CD4-positive, alpha-beta T cell (primary cell): ENCODE measurements at regions of chr2 and their contacts with region 1.

Region 1: GRCh38 chr2:136423516-136423996 is 305.6 kb upstream of the CXCR4 start:
- DNase-seq: peak; percentile 63 to 88 (median 72)
- ATAC-seq: peak; percentile 96
- H3K4me3 ChIP-seq: peak overlapping the region; percentile 56
- H3K4me3 Mint-ChIP-seq: peak overlapping the region; percentile 85
- H3K27ac ChIP-seq: no peak overlapping the region
- H3K27ac Mint-ChIP-seq: no peak overlapping the region
- H3K4me1 ChIP-seq: peaks cover 18% of the 10 kb centered on the region
- H3K4me1 Mint-ChIP-seq: peaks cover 15% of the 10 kb centered on the region
- H3K27me3 ChIP-seq: peaks cover 0 to 12% of the 10 kb centered on the region in 2 experiments
- H3K27me3 Mint-ChIP-seq: peaks cover 68% of the 10 kb centered on the region
- CTCF ChIP-seq: peak; percentile 93

Region 2: GRCh38 chr2:136407952-136408318 is 15.6 kb before region 1 on chr2:
- CTCF ChIA-PET with region 1: no interaction called
- POLR2A ChIA-PET with region 1: no interaction called
- intact Hi-C with region 1: no loop called
- DNase-seq: no peak
- ATAC-seq: no peak
- H3K4me3 ChIP-seq: no peak overlapping the region
- H3K4me3 Mint-ChIP-seq: no peak overlapping the region
- H3K27ac ChIP-seq: no peak overlapping the region
- H3K27ac Mint-ChIP-seq: no peak overlapping the region
- H3K4me1 ChIP-seq: no peaks in the 10 kb centered on the region
- H3K4me1 Mint-ChIP-seq: no peaks in the 10 kb centered on the region
- H3K27me3 ChIP-seq: peaks cover 13 to 22% of the 10 kb centered on the region in 2 experiments
- H3K27me3 Mint-ChIP-seq: peaks cover 48% of the 10 kb centered on the region
- CTCF ChIP-seq: no peak

Region 3: GRCh38 chr2:136653861-136654260 is 230.3 kb after region 1 on chr2:
- CTCF ChIA-PET with region 1: no interaction called
- POLR2A ChIA-PET with region 1: no interaction called
- intact Hi-C with region 1: loop called in 1 of 2 experiments (anchors 10 kb)
- DNase-seq: no peak
- ATAC-seq: no peak
- H3K4me3 ChIP-seq: no peak overlapping the region
- H3K4me3 Mint-ChIP-seq: no peak overlapping the region
- H3K27ac ChIP-seq: no peak overlapping the region
- H3K27ac Mint-ChIP-seq: no peak overlapping the region
- H3K4me1 ChIP-seq: no peaks in the 10 kb centered on the region
- H3K4me1 Mint-ChIP-seq: no peaks in the 10 kb centered on the region
- H3K27me3 ChIP-seq: peaks cover 0 to 3% of the 10 kb centered on the region in 2 experiments
- H3K27me3 Mint-ChIP-seq: peaks cover 13% of the 10 kb centered on the region
- CTCF ChIP-seq: no peak

Region 4: DNA sequence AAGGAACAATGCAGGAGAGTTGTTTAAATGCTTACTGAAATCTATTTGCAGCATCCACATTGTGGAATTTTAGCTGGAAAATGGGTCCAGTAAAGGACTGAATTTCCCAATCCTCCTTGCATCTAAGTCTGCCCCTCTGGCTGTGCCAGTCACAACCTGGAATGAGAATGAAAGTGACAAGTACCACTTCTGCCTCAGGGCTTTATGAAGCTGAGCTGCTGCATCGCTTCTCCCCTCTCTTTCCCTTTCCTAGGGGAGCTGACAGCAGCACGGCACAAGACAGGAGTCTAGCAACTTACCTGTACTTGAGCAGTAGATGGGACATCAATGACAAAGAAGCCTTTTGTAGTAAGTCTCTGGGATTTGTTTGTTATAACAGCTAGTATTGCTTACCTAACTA is 314.5 kb after region 1 on chr2:
- CTCF ChIA-PET with region 1: no interaction called
- POLR2A ChIA-PET with region 1: no interaction called
- intact Hi-C with region 1: loop called in 1 of 2 experiments (anchors 10 kb)
- DNase-seq: no peak
- ATAC-seq: no peak
- H3K4me3 ChIP-seq: no peak overlapping the region
- H3K4me3 Mint-ChIP-seq: no peak overlapping the region
- H3K27ac ChIP-seq: no peak overlapping the region
- H3K27ac Mint-ChIP-seq: no peak overlapping the region
- H3K4me1 ChIP-seq: no peaks in the 10 kb centered on the region
- H3K4me1 Mint-ChIP-seq: no peaks in the 10 kb centered on the region
- H3K27me3 ChIP-seq: peaks cover 0 to 3% of the 10 kb centered on the region in 2 experiments
- H3K27me3 Mint-ChIP-seq: peaks cover 40% of the 10 kb centered on the region
- CTCF ChIP-seq: no peak

Region 5: GRCh38 chr2:137838255-137839092 is 1414.9 kb after region 1 on chr2:
- CTCF ChIA-PET with region 1: no interaction called
- POLR2A ChIA-PET with region 1: interaction called, 3 read pairs
- intact Hi-C with region 1: loop called in 1 of 2 experiments (anchors 1 kb)
- DNase-seq: peak in 3 of 14 experiments; percentile 41 to 49 (median 42)
- ATAC-seq: peak; percentile 34
- H3K4me3 ChIP-seq: no peak overlapping the region
- H3K4me3 Mint-ChIP-seq: no peak overlapping the region
- H3K27ac ChIP-seq: no peak overlapping the region
- H3K27ac Mint-ChIP-seq: no peak overlapping the region
- H3K4me1 ChIP-seq: no peaks in the 10 kb centered on the region
- H3K4me1 Mint-ChIP-seq: no peaks in the 10 kb centered on the region
- H3K27me3 ChIP-seq: peaks cover 0 to 9% of the 10 kb centered on the region in 2 experiments
- H3K27me3 Mint-ChIP-seq: peaks cover 11% of the 10 kb centered on the region
- CTCF ChIP-seq: peak; percentile 82